Naive thymus-derived CD4-positive, alpha-beta T cell (primary cell): ENCODE measurements at regions of chr2 and their contacts with region 1.

Region 1: DNA sequence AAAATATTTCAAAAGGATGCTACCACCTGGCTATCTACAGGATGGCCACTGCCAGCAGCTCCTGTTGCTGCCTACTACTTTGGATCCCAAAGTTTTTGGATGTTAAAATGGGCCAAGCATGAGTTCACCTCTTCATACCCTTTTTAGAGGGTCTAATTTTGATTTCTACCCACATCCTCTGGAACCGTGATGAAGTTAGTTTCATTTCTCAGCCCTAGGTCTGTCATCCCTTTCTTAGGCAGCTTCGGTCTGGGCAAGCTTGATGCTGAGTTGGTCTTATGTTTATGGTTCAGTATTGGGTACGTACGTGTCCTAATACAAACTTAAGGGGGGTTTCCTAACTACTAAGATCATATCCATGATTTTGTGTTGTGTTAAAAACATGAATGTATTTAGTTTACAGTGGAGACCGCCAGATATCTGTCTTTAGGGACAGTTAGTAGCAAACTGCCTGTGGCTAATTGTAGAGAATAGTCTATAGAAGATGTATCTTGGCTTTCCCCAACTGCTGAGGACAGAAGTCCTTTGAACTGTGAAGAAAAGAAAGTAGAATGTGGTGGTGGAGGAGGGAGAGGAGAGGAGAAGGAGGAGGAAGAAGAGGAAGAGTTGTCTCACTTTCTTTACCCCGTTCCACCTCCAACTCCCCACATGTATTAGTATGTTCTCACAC is 184.9 kb downstream of the UBE2E3 start:
- DNase-seq: peak in 5 of 9 donors; percentile 28 to 54 (median 32)
- ATAC-seq: peak; percentile 77
- H3K4me3 ChIP-seq: peak overlapping the region; percentile 40
- H3K4me3 Mint-ChIP-seq: peak overlapping the region; percentile 73 to 87 (median 77)
- H3K27ac ChIP-seq: peak overlapping the region; percentile 58
- H3K27ac Mint-ChIP-seq: peak overlapping the region; percentile 89 to 98 (median 95)
- H3K4me1 ChIP-seq: peaks cover 31 to 45% of the 10 kb centered on the region in 2 donors
- H3K4me1 Mint-ChIP-seq: peaks cover 22 to 64% (median 51%) of the 10 kb centered on the region in 7 donors
- H3K27me3 ChIP-seq: no peaks in the 10 kb centered on the region
- H3K27me3 Mint-ChIP-seq: no peaks in the 10 kb centered on the region

Region 2: GRCh38 chr2:180873219-180873618 is 292.1 kb before region 1 on chr2:
- CTCF ChIA-PET with region 1: no interaction called
- POLR2A ChIA-PET with region 1: no interaction called
- intact Hi-C with region 1: no loop called
- DNase-seq: no peak
- ATAC-seq: no peak
- H3K4me3 ChIP-seq: no peak overlapping the region
- H3K4me3 Mint-ChIP-seq: no peak overlapping the region
- H3K27ac ChIP-seq: no peak overlapping the region
- H3K27ac Mint-ChIP-seq: no peak overlapping the region
- H3K4me1 ChIP-seq: no peaks in the 10 kb centered on the region
- H3K4me1 Mint-ChIP-seq: no peaks in the 10 kb centered on the region
- H3K27me3 ChIP-seq: no peaks in the 10 kb centered on the region
- H3K27me3 Mint-ChIP-seq: peaks cover 3 to 54% (median 42%) of the 10 kb centered on the region in 5 donors

Region 3: DNA sequence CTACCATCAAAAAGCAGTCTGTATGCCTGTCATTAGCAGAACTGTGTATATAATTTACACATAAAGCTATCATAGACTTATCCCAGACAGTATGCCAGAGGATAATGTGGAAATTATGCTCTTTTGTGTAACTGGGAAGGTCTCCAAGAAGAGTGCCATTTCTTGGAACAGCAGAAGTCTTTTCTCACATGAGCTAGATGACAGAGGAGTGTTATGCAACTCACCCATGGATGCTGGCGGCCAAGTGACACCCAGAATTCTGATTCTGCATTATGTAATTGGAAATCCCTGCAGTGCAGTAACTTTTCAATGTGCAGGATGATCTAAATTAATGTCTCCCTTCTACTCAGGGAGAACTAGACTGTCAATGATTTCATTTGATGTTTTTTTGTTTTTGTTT is 24.9 kb before region 1 on chr2:
- CTCF ChIA-PET with region 1: no interaction called
- POLR2A ChIA-PET with region 1: interaction called, 15 read pairs
- intact Hi-C with region 1: loop called (anchors 1 kb)
- DNase-seq: peak in 1 of 9 donors; percentile 29
- ATAC-seq: peak; percentile 30
- H3K4me3 ChIP-seq: peak overlapping the region; percentile 20
- H3K4me3 Mint-ChIP-seq: peak overlapping the region; percentile 31 to 94 (median 86)
- H3K27ac ChIP-seq: peak overlapping the region; percentile 78
- H3K27ac Mint-ChIP-seq: peak overlapping the region; percentile 93 to 100 (median 98)
- H3K4me1 ChIP-seq: peaks cover 46 to 66% of the 10 kb centered on the region in 2 donors
- H3K4me1 Mint-ChIP-seq: peaks cover 33 to 83% (median 75%) of the 10 kb centered on the region in 7 donors
- H3K27me3 ChIP-seq: no peaks in the 10 kb centered on the region
- H3K27me3 Mint-ChIP-seq: no peaks in the 10 kb centered on the region

Region 4: GRCh38 chr2:181146171-181146570 is 19.2 kb before region 1 on chr2:
- CTCF ChIA-PET with region 1: no interaction called
- POLR2A ChIA-PET with region 1: interaction called, 15 read pairs
- intact Hi-C with region 1: loop called (anchors 1 kb)
- DNase-seq: no peak
- ATAC-seq: peak; percentile 47
- H3K4me3 ChIP-seq: no peak overlapping the region
- H3K4me3 Mint-ChIP-seq: peak overlapping the region in 1 of 10 donors; percentile 9
- H3K27ac ChIP-seq: no peak overlapping the region
- H3K27ac Mint-ChIP-seq: peak overlapping the region in 5 of 9 donors; percentile 9 to 79 (median 46)
- H3K4me1 ChIP-seq: peaks cover 48 to 69% of the 10 kb centered on the region in 2 donors
- H3K4me1 Mint-ChIP-seq: peaks cover 20 to 74% (median 68%) of the 10 kb centered on the region in 7 donors
- H3K27me3 ChIP-seq: no peaks in the 10 kb centered on the region
- H3K27me3 Mint-ChIP-seq: no peaks in the 10 kb centered on the region

Region 5: DNA sequence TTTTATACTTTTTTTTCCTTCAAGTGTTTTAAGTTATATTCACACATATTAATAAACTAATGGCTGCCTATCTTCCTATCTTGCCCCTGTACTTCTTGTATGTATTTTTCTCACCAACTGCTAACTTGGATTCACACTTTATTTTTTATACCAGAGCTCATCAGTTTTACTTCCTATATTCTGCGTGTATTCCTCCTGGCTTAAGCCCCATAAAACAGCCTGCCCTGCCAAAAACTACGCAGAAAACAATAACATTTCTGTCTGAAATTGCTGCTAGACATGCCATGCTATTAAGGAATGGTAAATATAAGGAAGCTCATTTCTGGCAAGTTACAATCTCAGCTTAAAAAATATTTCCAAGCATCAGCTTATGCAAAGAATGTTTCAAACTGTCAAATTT is 12.6 kb before region 1 on chr2:
- CTCF ChIA-PET with region 1: no interaction called
- POLR2A ChIA-PET with region 1: interaction called, 15 read pairs
- intact Hi-C with region 1: loop called in 1 of 2 experiments (anchors 1 kb)
- DNase-seq: no peak
- ATAC-seq: no peak
- H3K4me3 ChIP-seq: no peak overlapping the region
- H3K4me3 Mint-ChIP-seq: peak overlapping the region in 5 of 10 donors; percentile 10 to 75 (median 16)
- H3K27ac ChIP-seq: peak overlapping the region; percentile 26
- H3K27ac Mint-ChIP-seq: peak overlapping the region in 8 of 9 donors; percentile 8 to 90 (median 55)
- H3K4me1 ChIP-seq: peaks cover 20 to 22% of the 10 kb centered on the region in 2 donors
- H3K4me1 Mint-ChIP-seq: peaks cover 18 to 54% (median 48%) of the 10 kb centered on the region in 7 donors
- H3K27me3 ChIP-seq: no peaks in the 10 kb centered on the region
- H3K27me3 Mint-ChIP-seq: no peaks in the 10 kb centered on the region

Region 6: GRCh38 chr2:181319286-181319685 is 154.0 kb after region 1 on chr2:
- CTCF ChIA-PET with region 1: no interaction called
- POLR2A ChIA-PET with region 1: no interaction called
- intact Hi-C with region 1: no loop called
- DNase-seq: no peak
- ATAC-seq: no peak
- H3K4me3 ChIP-seq: no peak overlapping the region
- H3K4me3 Mint-ChIP-seq: no peak overlapping the region
- H3K27ac ChIP-seq: no peak overlapping the region
- H3K27ac Mint-ChIP-seq: peak overlapping the region in 1 of 9 donors; percentile 7
- H3K4me1 ChIP-seq: peaks cover 7 to 8% of the 10 kb centered on the region in 2 donors
- H3K4me1 Mint-ChIP-seq: peaks cover 11 to 30% (median 17%) of the 10 kb centered on the region in 7 donors
- H3K27me3 ChIP-seq: no peaks in the 10 kb centered on the region
- H3K27me3 Mint-ChIP-seq: no peaks in the 10 kb centered on the region